IMR-90 (cell line): ENCODE measurements at regions of chr1 and their contacts with region 1.

Region 1: DNA sequence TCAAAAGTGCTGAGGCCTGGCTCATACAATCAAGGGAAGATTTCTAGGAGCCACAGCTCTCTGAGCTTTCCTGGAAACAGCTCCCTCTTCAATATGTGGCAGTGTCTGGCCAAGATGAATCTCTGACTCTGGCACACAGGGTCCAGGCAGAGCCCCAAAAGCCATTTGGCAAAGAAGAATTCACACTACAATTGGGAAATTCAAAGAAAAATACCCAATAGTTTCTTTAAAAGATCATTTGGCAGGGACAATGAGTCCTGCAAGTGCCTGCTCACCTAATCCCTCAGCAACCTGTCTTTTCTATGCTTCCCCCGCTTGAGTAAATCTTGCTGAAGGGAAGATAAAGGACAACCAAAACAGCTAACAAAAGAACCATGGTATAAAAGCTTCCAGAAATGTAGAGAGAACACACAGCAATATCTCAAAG is 124.6 kb downstream of the TGFBR3 start:
- DNase-seq: no peak
- ATAC-seq: no peak
- H3K4me3 ChIP-seq: no peak overlapping the region
- H3K27ac ChIP-seq: no peak overlapping the region
- H3K4me1 ChIP-seq: peaks cover 10% of the 10 kb centered on the region
- H3K27me3 ChIP-seq: no peaks in the 10 kb centered on the region
- CTCF ChIP-seq: no peak
- POLR2A ChIP-seq: no peak
- RAD21 ChIP-seq: no peak

Region 2: GRCh38 chr1:91774520-91775203 is 13.4 kb after region 1 on chr1:
- CTCF ChIA-PET with region 1: no interaction called
- POLR2A ChIA-PET with region 1: no interaction called
- dilution Hi-C with region 1: no loop called
- in situ Hi-C with region 1: no loop called
- intact Hi-C with region 1: loop called (anchors 2 kb)
- DNase-seq: peak; percentile 89
- ATAC-seq: peak; percentile 86
- H3K4me3 ChIP-seq: no peak overlapping the region
- H3K27ac ChIP-seq: no peak overlapping the region
- H3K4me1 ChIP-seq: 0 out of 2 replicates have a peak, but pooled peaks cover 2% of the 10 kb centered on the region
- H3K27me3 ChIP-seq: no peaks in the 10 kb centered on the region
- CTCF ChIP-seq: no peak
- POLR2A ChIP-seq: no peak
- RAD21 ChIP-seq: no peak

Region 3: GRCh38 chr1:92037400-92037799 is 276.1 kb after region 1 on chr1:
- CTCF ChIA-PET with region 1: no interaction called
- POLR2A ChIA-PET with region 1: no interaction called
- dilution Hi-C with region 1: no loop called
- in situ Hi-C with region 1: no loop called
- intact Hi-C with region 1: no loop called
- DNase-seq: peak; percentile 69
- ATAC-seq: peak; percentile 83
- H3K4me3 ChIP-seq: no peak overlapping the region
- H3K27ac ChIP-seq: no peak overlapping the region
- H3K4me1 ChIP-seq: peaks cover 3% of the 10 kb centered on the region; the same call in 1 of the 2 replicates
- H3K27me3 ChIP-seq: no peaks in the 10 kb centered on the region
- CTCF ChIP-seq: no peak
- POLR2A ChIP-seq: no peak
- RAD21 ChIP-seq: no peak